Posterior cingulate gyrus (tissue), 11 donors: ENCODE measurements at regions of chr5 and their contacts with region 1.

Region 1: DNA sequence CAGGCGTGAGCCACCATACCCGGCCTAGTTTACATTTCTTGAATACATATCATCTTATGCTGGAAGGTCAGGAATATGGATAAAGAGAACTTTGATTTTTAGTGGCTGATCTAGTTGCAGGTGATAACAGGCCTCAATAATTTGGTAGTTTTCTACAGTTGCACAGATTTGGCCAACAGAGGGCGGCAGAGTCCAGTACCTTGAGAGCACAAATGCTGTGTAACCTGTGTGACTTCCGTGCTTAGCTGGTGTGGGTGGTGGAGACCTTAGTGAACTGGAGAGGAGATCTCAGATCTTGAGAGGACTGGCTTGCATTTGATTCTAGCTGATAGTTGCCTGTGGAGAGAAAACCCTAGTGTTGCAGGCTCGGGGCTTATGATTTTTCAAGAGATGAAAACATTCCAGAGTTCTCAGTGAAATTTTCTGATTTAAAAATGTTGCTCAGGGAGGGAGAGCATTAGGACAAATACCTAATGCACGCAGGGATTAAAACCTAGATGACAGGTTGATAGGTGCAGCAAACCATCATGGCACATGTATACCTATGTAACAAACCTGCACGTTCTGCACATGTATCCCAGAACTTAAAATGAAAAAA is 17.4 kb upstream of the GPR151 start:
- DNase-seq: peak in 9 of 10 donors; percentile 44 to 95 (median 73)

Region 2: DNA sequence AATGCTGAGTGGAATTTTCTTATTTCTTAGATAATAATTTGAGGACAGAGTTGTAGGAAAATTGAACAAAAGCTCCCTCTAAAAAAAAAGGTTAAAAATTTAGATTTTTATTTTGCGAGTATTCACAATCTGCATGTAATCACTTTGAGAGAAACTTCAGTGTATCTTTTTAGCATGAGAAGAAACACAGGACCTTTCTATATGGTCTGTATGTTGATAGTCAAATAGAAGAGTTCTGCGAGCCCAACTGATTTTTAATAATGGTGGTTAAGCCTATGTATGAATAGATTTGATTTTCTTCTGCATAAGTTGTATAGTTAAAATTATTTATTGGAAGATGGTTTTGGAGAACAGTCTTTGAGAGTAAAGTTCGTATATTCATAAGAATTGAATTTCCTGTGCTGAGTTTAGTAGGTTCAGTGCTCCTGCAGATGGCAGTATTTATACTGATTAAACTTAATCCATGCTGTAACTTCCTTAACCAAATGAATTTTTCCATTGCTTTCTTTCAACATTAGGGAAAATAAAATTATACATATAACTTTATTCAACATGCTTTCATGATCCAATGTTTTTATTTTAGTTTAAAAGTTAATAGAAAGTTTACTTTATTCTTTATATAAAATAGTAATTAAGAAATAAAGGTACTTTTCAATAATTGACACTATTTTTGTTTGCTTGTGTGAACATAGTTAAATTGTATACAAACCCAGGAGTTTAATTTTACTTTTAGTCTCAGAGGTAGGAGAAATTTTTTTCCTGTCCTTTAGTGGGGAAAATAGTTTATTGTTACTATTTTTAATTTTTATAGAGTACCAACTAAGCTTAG is 66.6 kb before region 1 on chr5:
- intact Hi-C with region 1: loop called (anchors 10 kb)
- DNase-seq: no peak

Region 3: GRCh38 chr5:146588326-146589027 is 55.1 kb after region 1 on chr5:
- intact Hi-C with region 1: no loop called
- DNase-seq: no peak

Region 4: DNA sequence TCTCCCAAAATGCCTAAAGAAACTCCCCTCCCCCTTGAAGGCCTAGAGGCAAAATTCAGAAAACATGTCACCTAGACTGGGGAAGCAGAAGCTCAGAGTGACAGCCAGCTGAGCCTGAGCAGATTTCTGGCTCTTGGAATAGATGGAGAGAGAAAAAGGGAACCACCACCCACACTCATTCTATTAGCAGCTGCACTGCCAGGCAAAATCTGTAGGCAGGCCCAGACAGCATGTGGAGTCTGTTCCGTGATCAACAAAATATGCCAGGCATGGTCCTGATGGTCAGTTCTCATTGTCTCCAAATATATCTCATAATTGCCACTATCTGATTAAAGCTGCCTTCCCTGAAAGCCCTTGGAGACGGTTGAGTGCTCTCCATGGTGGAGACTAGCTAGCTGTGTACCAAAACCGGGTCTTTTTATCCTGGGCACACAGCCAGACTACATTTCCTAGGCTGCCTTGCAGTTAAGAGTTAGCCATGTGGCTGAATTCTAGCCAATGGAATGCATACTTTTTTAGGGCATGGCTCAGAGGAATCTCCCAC is 114.4 kb after region 1 on chr5:
- intact Hi-C with region 1: no loop called
- DNase-seq: peak; percentile 20 to 93 (median 54)

Region 5: DNA sequence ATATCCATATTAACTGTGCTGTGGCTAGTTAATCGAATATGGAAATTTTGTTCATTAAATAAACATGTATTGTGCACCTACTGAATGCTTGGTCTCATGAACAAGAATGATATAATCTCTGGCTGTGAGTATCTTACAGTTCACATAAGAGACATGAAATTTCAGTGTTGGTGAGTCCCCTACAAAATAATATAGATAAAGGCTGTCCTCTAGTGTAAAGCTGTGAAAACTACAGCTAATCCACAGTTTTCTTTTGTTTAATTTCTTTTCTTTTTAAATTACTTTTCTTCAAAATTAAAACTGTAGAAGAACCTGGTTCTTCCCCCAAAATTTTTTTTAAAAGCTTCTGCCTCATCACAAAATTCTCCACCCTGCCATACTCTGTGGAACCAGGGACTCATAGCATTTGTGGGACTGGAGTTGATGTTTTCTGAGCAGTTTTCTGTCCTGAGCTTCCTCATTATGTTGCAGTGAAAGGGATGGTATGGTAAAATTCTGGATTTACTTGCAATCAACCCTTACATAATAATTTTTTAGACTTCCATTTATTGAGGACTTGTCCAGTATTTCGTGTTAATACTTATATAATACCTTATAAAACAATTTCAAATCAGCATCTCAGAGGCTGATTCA is 836.5 kb after region 1 on chr5:
- intact Hi-C with region 1: loop called (anchors 2 kb)
- DNase-seq: no peak